MCF 10A (cell line): ENCODE measurements at regions of chr20 and their contacts with region 1.

Region 1: DNA sequence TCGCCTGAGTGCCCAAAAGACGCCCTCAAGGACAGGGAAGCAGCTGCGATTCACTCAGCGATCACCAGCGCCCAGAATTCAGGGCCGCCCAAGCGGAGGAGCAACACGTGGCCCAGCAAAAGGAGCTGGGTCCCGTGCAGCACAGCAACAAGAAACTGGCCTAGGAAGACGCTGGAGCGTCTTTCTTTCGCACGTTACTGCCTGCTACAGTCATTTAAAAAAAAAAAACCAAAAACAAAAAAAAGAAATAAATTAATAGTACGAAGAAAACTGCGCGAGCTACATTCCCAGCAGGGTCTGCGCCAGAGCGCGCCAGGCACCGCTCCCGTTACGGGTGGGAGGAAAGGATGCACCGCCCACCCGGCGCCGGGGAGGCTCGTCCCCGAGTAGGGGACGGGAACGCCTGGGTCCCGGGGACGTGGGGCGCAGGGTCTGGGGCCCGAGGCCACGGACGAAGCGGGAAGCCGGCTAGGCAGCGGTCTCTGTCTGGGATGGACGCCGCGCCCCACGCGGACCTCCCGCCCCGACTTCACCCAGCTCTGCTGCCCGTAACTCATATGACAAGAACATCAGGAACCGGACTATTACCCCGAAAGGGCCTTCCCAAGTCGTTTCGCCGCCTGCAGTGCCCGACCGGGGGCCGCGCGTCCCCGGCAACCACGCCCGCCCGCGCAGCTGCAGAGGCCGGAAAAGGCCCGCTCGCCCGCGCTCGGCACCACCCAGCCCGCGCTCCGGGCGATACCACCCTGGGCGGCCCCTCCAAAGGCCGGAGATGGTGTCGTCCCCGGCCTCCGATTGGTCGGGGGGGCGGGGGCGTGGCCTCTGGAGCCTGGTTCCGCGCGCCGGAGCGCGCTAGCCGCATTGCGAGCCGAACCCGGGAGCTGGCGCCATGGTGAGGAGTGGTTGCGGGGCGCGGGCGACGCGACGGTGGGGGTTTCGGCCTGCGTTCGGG is at the start of gene NOP56:
- DNase-seq: peak; percentile 89
- H3K4me3 Mint-ChIP-seq: peak within 1 kb of the TSS; percentile 87
- H3K27ac Mint-ChIP-seq: peak within 1 kb of the TSS; percentile 66
- H3K4me1 Mint-ChIP-seq: peaks cover 23% of the 10 kb centered on the region
- H3K27me3 Mint-ChIP-seq: no peaks in the 10 kb centered on the region
- CTCF ChIP-seq: no peak
- total RNA-seq, gene NOP56: 228 and 340 TPM in 2 replicates

Region 2: DNA sequence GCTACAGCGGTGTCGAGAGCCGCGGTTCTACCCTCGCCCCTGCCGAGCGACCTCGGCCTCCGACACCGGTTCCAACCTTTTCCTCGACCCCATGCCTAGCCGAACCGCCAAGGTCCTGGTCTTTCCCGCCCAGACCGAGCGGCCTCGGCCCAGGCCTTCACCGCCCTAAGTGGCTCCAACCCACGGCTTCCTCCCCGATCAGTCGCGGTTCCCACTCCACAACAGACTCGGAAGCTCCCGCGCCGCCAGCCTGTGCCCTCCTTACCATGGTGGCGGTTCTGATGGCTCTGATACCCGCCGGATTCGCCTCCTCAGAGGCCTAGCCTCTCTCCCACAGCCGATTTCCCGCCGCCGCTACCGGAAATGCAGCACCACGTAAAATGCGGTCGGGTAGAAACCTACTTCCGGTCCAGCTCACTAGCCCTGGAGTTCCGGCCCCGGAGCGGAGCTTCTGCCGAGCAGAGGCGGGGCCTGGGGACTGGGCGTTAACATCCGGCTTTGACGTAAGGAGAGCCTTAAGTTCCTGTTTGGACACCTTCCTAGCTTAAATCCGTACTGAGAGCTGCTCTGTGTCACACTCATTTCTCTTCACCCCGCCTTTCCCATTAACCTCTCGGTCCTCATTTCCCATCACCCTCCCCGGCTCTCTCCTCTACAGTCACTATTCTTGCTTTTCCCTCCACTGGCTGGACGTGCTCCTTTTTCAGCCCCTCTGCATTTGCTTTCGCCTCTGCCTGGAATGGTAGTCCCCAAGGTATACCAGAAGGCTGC is 181.4 kb before region 1 on chr20 and contains the start of gene SNRPB:
- CTCF ChIA-PET with region 1: interaction called, 3 read pairs
- POLR2A ChIA-PET with region 1: interaction called, 75 read pairs
- intact Hi-C with region 1: no loop called
- DNase-seq: peak; percentile 98
- H3K4me3 Mint-ChIP-seq: peak within 1 kb of the TSS; percentile 96
- H3K27ac Mint-ChIP-seq: peak within 1 kb of the TSS; percentile 100
- H3K4me1 Mint-ChIP-seq: peaks cover 55% of the 10 kb centered on the region
- H3K27me3 Mint-ChIP-seq: no peaks in the 10 kb centered on the region
- CTCF ChIP-seq: no peak
- total RNA-seq, gene SNRPB: 236 and 240 TPM in 2 replicates

Region 3: DNA sequence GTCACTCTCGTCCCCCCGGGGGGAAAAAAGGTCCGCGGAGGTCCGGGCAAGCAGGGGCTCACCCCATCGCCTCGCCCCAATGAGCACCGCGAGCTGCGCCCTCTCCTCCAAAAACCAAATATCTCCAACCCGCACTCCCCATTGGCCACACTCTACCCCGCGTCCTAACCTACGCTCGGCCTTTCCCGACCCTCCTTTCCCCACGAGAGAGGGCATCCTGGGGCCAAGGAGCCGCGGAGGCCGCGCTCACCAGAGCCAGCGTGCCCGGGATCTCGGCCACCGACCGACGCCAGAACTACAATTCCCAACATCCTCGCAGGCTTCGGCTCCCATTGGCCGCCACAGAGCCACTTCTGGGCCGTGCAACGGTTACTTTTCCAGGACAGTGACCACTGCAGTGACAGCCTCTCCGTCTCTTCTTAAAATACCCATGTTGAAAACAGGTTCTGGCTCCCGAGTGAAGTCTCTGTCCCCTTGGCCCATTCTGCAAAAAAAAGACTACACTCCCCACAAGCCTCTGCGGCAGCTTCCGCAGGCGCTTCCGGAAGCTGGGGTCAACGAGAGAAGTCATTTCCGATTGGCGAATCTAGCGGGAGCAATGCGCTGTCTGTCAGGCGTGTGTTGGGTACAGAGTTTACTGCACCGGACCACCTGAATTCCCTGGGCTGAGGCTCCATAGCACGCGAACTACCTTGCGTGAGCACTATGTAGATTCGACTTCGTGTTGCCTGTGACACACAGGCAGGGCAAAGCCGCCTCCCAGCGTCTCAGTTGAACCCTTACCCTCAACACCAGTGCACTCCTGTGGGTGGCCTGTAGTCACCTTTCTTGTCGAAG is 143.2 kb before region 1 on chr20 and contains the start of gene ZNF343:
- CTCF ChIA-PET with region 1: no interaction called
- POLR2A ChIA-PET with region 1: interaction called, 24 read pairs
- intact Hi-C with region 1: no loop called
- DNase-seq: peak; percentile 82
- H3K4me3 Mint-ChIP-seq: peak within 1 kb of the TSS; percentile 88
- H3K27ac Mint-ChIP-seq: peak within 1 kb of the TSS; percentile 96
- H3K4me1 Mint-ChIP-seq: no peaks in the 10 kb centered on the region
- H3K27me3 Mint-ChIP-seq: no peaks in the 10 kb centered on the region
- CTCF ChIP-seq: no peak
- total RNA-seq, gene ZNF343: 16.6 and 17.5 TPM in 2 replicates

Region 4: DNA sequence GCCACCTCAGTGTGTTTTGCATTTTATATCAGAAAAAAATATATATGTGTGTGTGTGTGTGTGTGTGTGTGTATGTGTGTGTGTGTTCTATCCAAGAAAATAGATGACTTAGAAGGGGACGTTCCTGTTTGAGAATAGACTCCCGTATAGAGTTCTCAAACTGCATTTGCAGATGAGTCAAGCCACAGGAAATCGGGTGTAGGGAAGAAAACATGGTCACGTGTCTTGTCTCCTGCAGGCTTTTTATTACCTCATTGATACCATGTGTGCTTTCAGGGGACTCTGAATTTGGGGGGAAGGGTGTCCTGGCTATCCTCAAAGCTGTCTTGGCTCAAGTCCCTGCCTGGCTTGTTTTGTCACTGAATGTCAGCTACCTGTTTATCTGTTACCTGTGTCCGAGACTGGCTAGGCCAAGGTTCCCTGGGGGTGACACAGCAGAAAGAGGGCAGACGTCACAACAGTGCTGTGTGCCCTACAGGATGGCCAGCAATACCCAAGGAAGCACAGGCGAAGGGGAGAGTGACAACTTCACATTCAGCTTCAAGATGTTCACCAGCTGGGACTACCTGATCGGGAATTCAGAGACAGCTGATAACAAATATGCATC is 55.3 kb before region 1 on chr20:
- CTCF ChIA-PET with region 1: no interaction called
- POLR2A ChIA-PET with region 1: no interaction called
- intact Hi-C with region 1: no loop called
- DNase-seq: no peak
- H3K4me3 Mint-ChIP-seq: no peak overlapping the region
- H3K27ac Mint-ChIP-seq: no peak overlapping the region
- H3K4me1 Mint-ChIP-seq: no peaks in the 10 kb centered on the region
- H3K27me3 Mint-ChIP-seq: peaks cover 42% of the 10 kb centered on the region
- CTCF ChIP-seq: no peak

Region 5: GRCh38 chr20:2637246-2637645 is 14.8 kb before region 1 on chr20:
- CTCF ChIA-PET with region 1: interaction called, 30 read pairs
- POLR2A ChIA-PET with region 1: interaction called, 33 read pairs
- intact Hi-C with region 1: no loop called
- DNase-seq: no peak
- H3K4me3 Mint-ChIP-seq: no peak overlapping the region
- H3K27ac Mint-ChIP-seq: no peak overlapping the region
- H3K4me1 Mint-ChIP-seq: no peaks in the 10 kb centered on the region
- H3K27me3 Mint-ChIP-seq: peaks cover 10% of the 10 kb centered on the region
- CTCF ChIP-seq: no peak

Region 6: DNA sequence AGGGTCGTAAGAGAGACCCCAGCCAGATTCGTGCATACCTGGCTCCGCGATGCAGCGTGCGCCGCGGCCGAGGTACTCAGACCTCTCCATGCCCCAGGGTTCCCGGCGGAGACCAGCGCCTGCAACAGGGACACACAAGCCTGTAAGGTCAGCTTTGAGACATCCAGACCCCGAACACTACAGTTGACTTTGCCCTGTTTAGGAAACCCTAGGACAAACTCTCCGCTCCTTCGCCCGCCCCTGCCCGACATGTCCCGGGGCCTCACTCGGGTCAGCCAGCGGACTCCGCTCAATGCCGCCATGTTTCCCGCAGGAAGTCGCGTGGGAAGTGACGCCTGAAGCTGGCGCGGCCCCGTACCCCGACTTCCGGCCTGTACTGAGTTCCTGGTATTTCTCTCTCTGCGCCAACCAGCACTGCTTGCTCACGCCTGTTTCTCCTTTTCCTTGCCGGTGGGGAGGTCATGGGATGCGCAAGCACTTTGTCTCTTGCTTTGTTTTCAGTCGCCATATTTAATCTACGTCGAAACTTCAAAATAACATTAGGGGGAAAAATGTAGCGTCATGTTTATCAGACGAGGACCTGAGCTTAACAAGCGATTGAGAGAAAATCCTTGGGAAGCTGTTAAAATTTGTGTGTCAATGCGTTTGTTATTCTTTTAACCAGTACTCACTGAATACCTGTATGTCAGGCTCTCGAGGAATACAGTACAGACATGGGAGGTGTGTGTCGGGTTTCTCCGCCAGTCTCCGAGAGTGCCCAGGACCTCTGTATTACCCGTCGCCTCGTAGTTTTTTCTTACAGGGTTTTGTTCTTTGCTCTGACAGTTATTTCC is 12.1 kb after region 1 on chr20 and contains the start of gene IDH3B:
- CTCF ChIA-PET with region 1: interaction called, 4 read pairs
- POLR2A ChIA-PET with region 1: interaction called, 241 read pairs
- intact Hi-C with region 1: no loop called
- DNase-seq: peak; percentile 87
- H3K4me3 Mint-ChIP-seq: peak within 1 kb of the TSS; percentile 77
- H3K27ac Mint-ChIP-seq: peak within 1 kb of the TSS; percentile 96
- H3K4me1 Mint-ChIP-seq: peaks cover 16% of the 10 kb centered on the region
- H3K27me3 Mint-ChIP-seq: peaks cover 14% of the 10 kb centered on the region
- CTCF ChIP-seq: no peak
- total RNA-seq, gene IDH3B: 80.5 and 102 TPM in 2 replicates